GM12878 (cell line): ENCODE measurements at regions of chr7 and their contacts with region 1.

Region 1: DNA sequence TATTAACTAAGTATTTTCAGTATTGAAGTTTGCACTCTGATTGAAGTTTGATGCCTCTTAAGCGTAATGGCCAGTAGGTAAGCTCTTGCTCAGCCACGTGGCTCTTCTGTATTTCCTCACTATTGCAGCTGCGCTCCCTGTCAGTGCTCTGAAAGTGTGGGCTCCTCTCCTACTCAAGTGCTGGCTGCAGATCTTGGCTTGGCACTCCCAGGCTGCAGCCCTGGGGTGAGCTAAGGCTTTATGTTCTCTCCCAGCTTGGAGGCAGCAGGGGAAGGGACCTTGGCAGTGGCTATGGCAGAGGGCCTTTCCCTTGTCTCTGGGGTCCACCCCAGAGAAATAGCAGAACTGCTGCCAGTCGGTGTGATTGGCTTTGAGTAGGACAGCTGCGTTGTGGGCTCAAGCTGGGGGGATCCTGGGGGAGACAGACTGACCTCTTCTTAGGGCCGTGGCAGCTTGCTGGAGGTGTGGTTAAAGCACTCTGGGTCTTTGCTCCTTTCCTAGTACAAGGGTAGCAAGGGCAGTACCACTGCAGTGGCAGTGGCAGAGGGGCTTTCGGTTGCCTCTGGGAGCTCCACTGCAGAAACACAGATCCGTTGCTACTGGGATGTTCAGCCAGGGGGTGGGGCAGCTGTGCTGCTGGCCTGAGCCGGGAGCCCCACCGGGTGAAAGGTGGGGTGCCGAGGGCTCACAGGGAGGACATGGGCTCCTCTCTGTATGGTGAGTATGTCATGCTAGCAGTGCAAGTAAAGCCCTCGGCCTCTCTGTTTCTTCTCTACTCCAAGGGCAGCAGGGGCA is 100.5 kb downstream of the GLCCI1 start:
- DNase-seq: no peak
- ATAC-seq: no peak; the same call in 2 of the 3 replicates
- H3K4me3 ChIP-seq: no peak overlapping the region
- H3K27ac ChIP-seq: no peak overlapping the region
- H3K4me1 ChIP-seq: peaks cover 8% of the 10 kb centered on the region; the same call in 1 of the 2 replicates
- H3K27me3 ChIP-seq: no peaks in the 10 kb centered on the region
- CTCF ChIP-seq: no peak
- EP300 ChIP-seq: no peak
- POLR2A ChIP-seq: no peak
- RAD21 ChIP-seq: no peak

Region 2: GRCh38 chr7:8040768-8041369 is 28.2 kb before region 1 on chr7:
- CTCF ChIA-PET with region 1: no interaction called
- POLR2A ChIA-PET with region 1: no interaction called
- RAD21 ChIA-PET with region 1: no interaction called
- SMC1A ChIA-PET with region 1: no interaction called
- in situ Hi-C with region 1: no loop called
- intact Hi-C with region 1: no loop called
- DNase-seq: no peak
- ATAC-seq: peak; percentile 33
- H3K4me3 ChIP-seq: no peak overlapping the region
- H3K27ac ChIP-seq: no peak overlapping the region
- H3K4me1 ChIP-seq: no peaks in the 10 kb centered on the region
- H3K27me3 ChIP-seq: no peaks in the 10 kb centered on the region
- CTCF ChIP-seq: no peak
- EP300 ChIP-seq: no peak
- POLR2A ChIP-seq: no peak
- RAD21 ChIP-seq: no peak

Region 3: GRCh38 chr7:8084836-8085235 is 15.7 kb after region 1 on chr7:
- CTCF ChIA-PET with region 1: interaction called, 6 read pairs
- POLR2A ChIA-PET with region 1: interaction called, 3 read pairs
- RAD21 ChIA-PET with region 1: no interaction called
- SMC1A ChIA-PET with region 1: interaction called, 30 read pairs
- in situ Hi-C with region 1: no loop called
- intact Hi-C with region 1: no loop called
- DNase-seq: no peak
- ATAC-seq: no peak
- H3K4me3 ChIP-seq: no peak overlapping the region
- H3K27ac ChIP-seq: no peak overlapping the region
- H3K4me1 ChIP-seq: no peaks in the 10 kb centered on the region
- H3K27me3 ChIP-seq: no peaks in the 10 kb centered on the region
- CTCF ChIP-seq: no peak
- EP300 ChIP-seq: no peak
- POLR2A ChIP-seq: no peak
- RAD21 ChIP-seq: no peak

Region 4: GRCh38 chr7:8149222-8149621 is 80.1 kb after region 1 on chr7:
- CTCF ChIA-PET with region 1: no interaction called
- POLR2A ChIA-PET with region 1: no interaction called
- RAD21 ChIA-PET with region 1: no interaction called
- SMC1A ChIA-PET with region 1: no interaction called
- in situ Hi-C with region 1: no loop called
- intact Hi-C with region 1: no loop called
- DNase-seq: no peak
- ATAC-seq: peak; percentile 79
- H3K4me3 ChIP-seq: no peak overlapping the region
- H3K27ac ChIP-seq: peak overlapping the region; percentile 16
- H3K4me1 ChIP-seq: peaks cover 8% of the 10 kb centered on the region; the same call in 1 of the 2 replicates
- H3K27me3 ChIP-seq: no peaks in the 10 kb centered on the region
- CTCF ChIP-seq: no peak
- EP300 ChIP-seq: no peak
- POLR2A ChIP-seq: no peak
- RAD21 ChIP-seq: no peak